Breast epithelium (tissue), 4 donors: ENCODE measurements at regions of chr2 and their contacts with region 1.

Region 1: GRCh38 chr2:102063941-102064678 is 72.3 kb downstream of the IL1R2 start:
- DNase-seq: peak; percentile 82
- H3K4me3 ChIP-seq: peak overlapping the region in 1 of 3 donors; percentile 27
- H3K27ac ChIP-seq: peak overlapping the region; percentile 91 to 97
- H3K4me1 ChIP-seq: peaks cover 7 to 15% of the 10 kb centered on the region in 2 donors
- H3K27me3 ChIP-seq: no peaks in the 10 kb centered on the region
- CTCF ChIP-seq: no peak
- POLR2A ChIP-seq: no peak

Region 2: GRCh38 chr2:102141970-102142828 is 78.1 kb after region 1 on chr2 and contains the start of gene IL1R1:
- intact Hi-C with region 1: loop called (anchors 10 kb)
- DNase-seq: peak; percentile 63 to 71
- H3K4me3 ChIP-seq: peak within 1 kb of the TSS; percentile 71 to 94 (median 86)
- H3K27ac ChIP-seq: peak within 1 kb of the TSS; percentile 93 to 99
- H3K4me1 ChIP-seq: no peaks in the 10 kb centered on the region
- H3K27me3 ChIP-seq: no peaks in the 10 kb centered on the region
- CTCF ChIP-seq: no peak
- POLR2A ChIP-seq: no peak
- total RNA-seq, gene IL1R1: 127 to 206 (median 136) TPM

Region 3: DNA sequence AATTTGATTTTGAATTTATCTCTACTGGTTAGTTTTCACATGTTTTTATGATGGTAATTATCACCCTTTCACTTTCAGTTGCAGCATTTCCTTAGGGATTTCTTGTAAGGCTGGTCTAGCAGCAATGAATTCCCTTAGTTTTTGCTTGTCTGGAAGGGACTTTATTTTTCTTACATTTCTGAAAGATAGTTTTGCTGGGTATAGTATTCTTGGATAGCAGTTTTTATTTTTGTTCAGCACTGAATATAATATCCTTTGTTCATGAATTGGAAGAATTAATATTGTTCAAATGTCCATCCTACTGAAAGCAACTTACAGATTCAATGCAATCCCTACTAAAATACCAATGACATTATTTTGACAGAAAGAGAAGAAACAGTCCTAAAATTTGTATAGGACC is 152.9 kb after region 1 on chr2:
- intact Hi-C with region 1: no loop called
- DNase-seq: no peak
- H3K4me3 ChIP-seq: no peak overlapping the region
- H3K27ac ChIP-seq: no peak overlapping the region
- H3K4me1 ChIP-seq: no peaks in the 10 kb centered on the region
- H3K27me3 ChIP-seq: no peaks in the 10 kb centered on the region
- CTCF ChIP-seq: no peak
- POLR2A ChIP-seq: no peak

Region 4: GRCh38 chr2:102291318-102292251 is 227.5 kb after region 1 on chr2:
- intact Hi-C with region 1: no loop called
- DNase-seq: no peak
- H3K4me3 ChIP-seq: no peak overlapping the region
- H3K27ac ChIP-seq: no peak overlapping the region
- H3K4me1 ChIP-seq: no peaks in the 10 kb centered on the region
- H3K27me3 ChIP-seq: no peaks in the 10 kb centered on the region
- CTCF ChIP-seq: no peak
- POLR2A ChIP-seq: no peak